ENCODE measurements at regions of chr9 and their contacts with region 1.

Region 1: DNA sequence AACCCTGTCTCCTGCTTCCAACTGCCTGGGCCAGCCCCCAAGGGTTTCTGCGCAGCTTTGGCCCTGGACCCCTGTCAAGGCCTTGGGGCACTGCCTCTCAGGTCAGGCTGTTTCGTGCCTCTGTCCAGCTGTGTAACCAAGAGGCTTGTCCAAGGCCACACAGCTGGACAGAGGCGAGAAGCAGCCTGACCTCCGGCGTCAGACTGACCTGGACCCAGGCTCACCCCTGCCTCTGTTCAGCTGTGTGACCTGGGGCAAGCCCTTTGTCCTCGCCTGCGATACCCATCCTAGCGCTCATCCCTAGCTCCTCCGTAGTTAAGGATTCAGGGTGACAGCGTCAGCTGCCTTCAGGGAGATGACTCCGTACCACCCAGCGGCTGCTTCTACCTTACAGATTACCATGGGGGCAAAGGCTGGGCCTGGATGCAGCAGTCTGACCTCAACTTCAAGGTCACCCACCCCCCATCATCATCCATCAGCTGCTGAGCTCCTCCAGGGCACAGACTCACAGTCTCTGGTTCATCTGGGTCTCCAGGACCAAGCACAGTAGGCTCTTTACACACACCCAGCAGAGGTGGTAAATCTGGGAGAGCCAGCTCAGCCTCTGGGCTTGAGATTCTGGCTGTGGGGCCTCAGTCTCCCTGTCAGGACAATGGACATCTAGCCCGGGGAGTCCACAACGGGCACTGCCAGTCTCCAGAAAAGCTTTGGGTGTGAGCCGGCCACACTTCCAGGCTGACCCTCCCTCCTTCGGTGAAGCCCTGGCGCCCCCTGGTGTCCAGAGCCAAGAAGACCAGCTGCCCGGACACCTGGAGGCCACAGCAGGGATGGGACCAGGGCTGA is 7.9 kb downstream of the AK1 start:
- DNase-seq: peak; percentile 72 to 74 (median 73)
- H3K4me3 ChIP-seq: no peak overlapping the region
- H3K27ac ChIP-seq: no peak overlapping the region
- H3K4me1 ChIP-seq: peaks cover 0 to 26% (median 22%) of the 10 kb centered on the region in 4 experiments
- H3K27me3 ChIP-seq: no peaks in the 10 kb centered on the region

Region 2: GRCh38 chr9:127770905-127771569 is 98.5 kb before region 1 on chr9:
- CTCF ChIA-PET with region 1: interaction called, 14 read pairs
- POLR2A ChIA-PET with region 1: interaction called, 4 read pairs
- DNase-seq: peak; percentile 98 to 99 (median 99)
- H3K4me3 ChIP-seq: peak overlapping the region; percentile 46 to 83 (median 71)
- H3K27ac ChIP-seq: peak overlapping the region in 1 of 2 experiments; percentile 76
- H3K4me1 ChIP-seq: peaks cover 12 to 70% (median 64%) of the 10 kb centered on the region in 4 experiments
- H3K27me3 ChIP-seq: no peaks in the 10 kb centered on the region

Region 3: DNA sequence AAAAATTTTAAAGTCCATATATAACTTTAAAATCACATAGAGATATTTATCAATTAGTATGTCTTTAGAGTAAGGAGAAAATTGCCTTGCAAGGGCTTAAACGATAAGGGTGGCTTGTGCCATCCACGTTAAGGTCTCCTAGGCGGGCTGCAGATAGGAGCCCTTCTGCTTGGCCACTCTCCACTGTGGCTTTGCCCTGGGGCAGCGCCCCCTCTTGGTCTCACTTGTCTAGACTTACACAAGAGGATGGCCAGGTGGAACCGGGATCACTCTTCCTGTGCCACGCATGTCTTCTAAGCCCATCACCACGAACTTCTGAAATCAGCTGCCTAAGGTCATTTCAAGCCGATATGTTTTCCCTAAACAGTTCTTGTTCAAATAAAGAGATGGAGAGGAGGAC is 63.9 kb before region 1 on chr9:
- CTCF ChIA-PET with region 1: interaction called, 16 read pairs
- POLR2A ChIA-PET with region 1: interaction called, 3 read pairs
- DNase-seq: peak; percentile 55 to 62 (median 60)
- H3K4me3 ChIP-seq: no peak overlapping the region
- H3K27ac ChIP-seq: no peak overlapping the region
- H3K4me1 ChIP-seq: peaks cover 9 to 39% (median 34%) of the 10 kb centered on the region in 4 experiments
- H3K27me3 ChIP-seq: no peaks in the 10 kb centered on the region

Region 4: DNA sequence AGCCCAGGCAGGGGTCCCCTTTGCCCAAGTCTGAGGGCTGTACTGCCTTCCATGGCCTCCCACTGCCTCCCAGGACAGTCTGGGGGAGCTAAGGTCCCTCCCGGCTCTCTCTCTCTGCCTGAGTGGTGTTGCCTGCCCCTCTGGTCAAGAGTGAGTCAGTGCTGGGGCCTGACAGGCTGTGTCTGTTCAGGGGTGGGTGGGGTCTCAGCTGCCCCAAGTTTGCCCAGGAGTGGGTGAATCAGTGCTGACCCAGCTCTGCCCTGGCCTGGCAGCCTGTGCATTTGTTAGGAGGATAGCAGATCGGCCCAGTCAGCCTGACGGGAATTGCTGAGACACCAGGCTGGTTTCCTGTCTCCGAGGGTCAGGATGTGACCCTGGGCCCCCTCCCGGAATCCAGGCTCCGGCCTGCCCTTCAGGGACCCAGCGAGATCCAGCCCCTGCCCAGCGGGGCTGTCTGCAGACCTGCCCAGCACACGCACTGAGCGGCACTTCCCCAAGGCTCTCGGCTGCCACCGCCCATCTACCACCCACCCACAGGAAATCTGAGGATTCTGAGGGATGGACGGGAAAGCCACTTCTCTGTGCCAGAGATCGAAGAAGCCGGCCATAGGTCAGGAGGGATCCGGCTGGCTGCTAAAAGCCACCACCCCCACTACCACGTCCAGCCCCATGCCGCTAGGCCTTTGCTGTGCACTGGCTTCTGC is 31.0 kb before region 1 on chr9:
- CTCF ChIA-PET with region 1: interaction called, 26 read pairs
- POLR2A ChIA-PET with region 1: no interaction called
- DNase-seq: no peak
- H3K4me3 ChIP-seq: peak overlapping the region in 2 of 7 experiments; percentile 9 to 10
- H3K27ac ChIP-seq: peak overlapping the region in 1 of 2 experiments; percentile 33
- H3K4me1 ChIP-seq: peaks cover 0 to 53% (median 48%) of the 10 kb centered on the region in 4 experiments
- H3K27me3 ChIP-seq: no peaks in the 10 kb centered on the region

Region 5: DNA sequence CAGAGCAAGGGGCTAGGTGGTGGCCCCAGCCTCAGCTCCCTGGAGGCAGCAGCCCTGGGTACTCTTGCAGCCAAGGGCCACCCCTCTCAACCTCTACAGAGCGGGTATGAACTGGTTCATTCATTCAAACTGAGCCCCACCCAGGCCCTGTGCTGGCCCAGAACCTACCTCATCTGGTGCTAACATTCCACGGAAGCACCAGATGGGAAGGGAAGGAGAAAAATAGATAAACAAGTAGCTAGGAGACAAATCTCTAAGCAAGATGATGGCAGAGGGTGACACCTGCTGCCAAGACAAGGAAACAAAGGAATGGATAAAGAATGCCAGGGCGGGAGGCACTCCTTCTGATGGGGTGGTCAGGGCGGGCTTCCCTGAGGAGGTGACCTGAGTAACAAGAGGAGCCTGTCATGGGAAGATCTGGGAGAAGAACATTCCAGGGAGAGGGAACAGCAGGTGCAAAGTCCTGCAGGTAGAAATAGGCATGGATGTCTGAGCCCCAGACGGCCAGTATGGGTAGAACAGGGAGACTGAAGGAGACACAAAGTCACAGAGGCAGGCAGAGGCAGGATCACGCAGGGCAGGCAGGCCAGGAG is 41.2 kb after region 1 on chr9:
- CTCF ChIA-PET with region 1: interaction called, 14 read pairs
- POLR2A ChIA-PET with region 1: interaction called, 4 read pairs
- DNase-seq: no peak
- H3K4me3 ChIP-seq: no peak overlapping the region
- H3K27ac ChIP-seq: peak overlapping the region in 1 of 2 experiments; percentile 38
- H3K4me1 ChIP-seq: peaks cover 0 to 41% (median 27%) of the 10 kb centered on the region in 4 experiments
- H3K27me3 ChIP-seq: no peaks in the 10 kb centered on the region

Region 6: DNA sequence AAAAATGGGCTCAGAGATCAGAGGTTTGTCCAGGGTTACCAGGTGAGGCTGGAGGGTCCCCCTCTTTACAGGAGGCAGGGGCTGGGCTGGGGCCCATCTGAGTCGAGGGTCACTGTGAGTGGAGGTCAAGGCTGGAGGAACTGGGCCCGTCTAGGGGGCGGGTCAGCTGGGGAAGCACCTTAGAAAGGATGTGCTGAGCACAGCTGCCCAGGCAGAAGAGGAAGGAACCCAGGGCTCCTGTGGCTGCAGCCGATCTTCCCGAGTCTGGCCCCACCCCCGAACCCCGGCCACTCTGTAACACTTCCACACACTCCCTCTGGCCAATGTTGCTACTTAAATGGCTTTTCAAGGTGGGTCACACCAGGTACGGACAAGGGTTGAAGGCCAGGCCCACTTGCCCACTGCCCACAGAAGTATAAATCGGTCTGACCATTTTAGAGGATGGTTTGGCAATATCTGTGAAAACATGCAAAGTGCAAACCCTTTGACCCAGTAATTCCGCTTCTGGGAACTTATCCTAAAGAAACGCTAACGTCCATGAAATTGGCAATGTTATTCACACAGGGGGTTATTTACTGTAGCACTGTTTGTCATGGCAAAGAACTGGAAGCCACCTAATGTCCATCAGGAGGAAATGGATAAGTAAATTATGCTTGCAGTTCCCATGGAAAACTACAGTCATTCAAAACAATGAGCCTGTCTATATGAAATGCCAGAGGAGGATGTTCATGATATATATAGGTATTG is 141.7 kb after region 1 on chr9:
- CTCF ChIA-PET with region 1: no interaction called
- POLR2A ChIA-PET with region 1: no interaction called
- DNase-seq: peak in 2 of 3 donors; percentile 38 to 49
- H3K4me3 ChIP-seq: peak overlapping the region in 2 of 7 experiments; percentile 5 to 16
- H3K27ac ChIP-seq: no peak overlapping the region
- H3K4me1 ChIP-seq: peaks cover 4 to 32% (median 22%) of the 10 kb centered on the region in 4 experiments
- H3K27me3 ChIP-seq: no peaks in the 10 kb centered on the region

Measured in common myeloid progenitor, CD34-positive (primary cell).